ENCODE measurements at regions of chr2 and their contacts with region 1.

Region 1: DNA sequence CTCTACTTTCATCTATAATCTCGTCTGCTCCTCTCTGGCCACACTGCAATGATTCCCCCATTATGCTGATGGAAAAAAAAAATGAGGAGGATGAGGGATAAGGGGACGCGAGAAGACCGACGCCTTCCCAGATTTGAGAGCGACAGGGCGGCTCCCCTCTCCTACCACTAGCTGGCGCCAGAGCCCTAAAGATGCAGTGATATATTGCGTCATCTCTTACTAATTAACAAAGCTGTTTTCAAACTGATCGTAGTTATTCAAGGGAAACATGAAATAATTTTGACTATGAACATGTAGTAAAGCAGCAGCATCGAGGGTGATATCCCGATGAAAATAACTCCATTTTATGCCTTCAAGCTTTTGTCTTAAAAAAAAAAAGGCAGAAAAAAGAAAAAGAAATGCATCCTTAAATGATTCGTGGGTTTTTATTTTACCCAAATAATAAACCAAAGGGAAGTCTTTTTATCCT is 48.0 kb upstream of the HNRNPA3 start:
- DNase-seq: peak; percentile 75 to 87
- H3K4me3 ChIP-seq: peak overlapping the region; percentile 37; the same call in 1 of the 2 replicates
- H3K27ac ChIP-seq: peak overlapping the region; percentile 65
- H3K4me1 ChIP-seq: peaks cover 55% of the 10 kb centered on the region
- H3K27me3 ChIP-seq: no peaks in the 10 kb centered on the region
- CTCF ChIP-seq: peak; percentile 100

Region 2: GRCh38 chr2:177195194-177195593 is 30.6 kb after region 1 on chr2:
- CTCF ChIA-PET with region 1: interaction called, 16 read pairs
- POLR2A ChIA-PET with region 1: interaction called, 6 read pairs
- intact Hi-C with region 1: no loop called
- DNase-seq: no peak
- H3K4me3 ChIP-seq: no peak overlapping the region
- H3K27ac ChIP-seq: no peak overlapping the region
- H3K4me1 ChIP-seq: no peaks in the 10 kb centered on the region
- H3K27me3 ChIP-seq: no peaks in the 10 kb centered on the region
- CTCF ChIP-seq: no peak

Region 3: GRCh38 chr2:177239932-177240630 is 75.5 kb after region 1 on chr2:
- CTCF ChIA-PET with region 1: interaction called, 22 read pairs
- POLR2A ChIA-PET with region 1: interaction called, 5 read pairs
- intact Hi-C with region 1: no loop called
- DNase-seq: peak in 1 of 2 experiments; percentile 47
- H3K4me3 ChIP-seq: no peak overlapping the region
- H3K27ac ChIP-seq: peak overlapping the region; percentile 97
- H3K4me1 ChIP-seq: peaks cover 56% of the 10 kb centered on the region
- H3K27me3 ChIP-seq: no peaks in the 10 kb centered on the region
- CTCF ChIP-seq: no peak

Region 4: GRCh38 chr2:177332041-177332991 is 167.7 kb after region 1 on chr2:
- CTCF ChIA-PET with region 1: interaction called, 35 read pairs
- POLR2A ChIA-PET with region 1: interaction called, 6 read pairs
- intact Hi-C with region 1: loop called (anchors 1 kb)
- DNase-seq: peak; percentile 58
- H3K4me3 ChIP-seq: no peak overlapping the region
- H3K27ac ChIP-seq: no peak overlapping the region
- H3K4me1 ChIP-seq: peaks cover 10% of the 10 kb centered on the region
- H3K27me3 ChIP-seq: no peaks in the 10 kb centered on the region
- CTCF ChIP-seq: peak; percentile 87

Region 5: DNA sequence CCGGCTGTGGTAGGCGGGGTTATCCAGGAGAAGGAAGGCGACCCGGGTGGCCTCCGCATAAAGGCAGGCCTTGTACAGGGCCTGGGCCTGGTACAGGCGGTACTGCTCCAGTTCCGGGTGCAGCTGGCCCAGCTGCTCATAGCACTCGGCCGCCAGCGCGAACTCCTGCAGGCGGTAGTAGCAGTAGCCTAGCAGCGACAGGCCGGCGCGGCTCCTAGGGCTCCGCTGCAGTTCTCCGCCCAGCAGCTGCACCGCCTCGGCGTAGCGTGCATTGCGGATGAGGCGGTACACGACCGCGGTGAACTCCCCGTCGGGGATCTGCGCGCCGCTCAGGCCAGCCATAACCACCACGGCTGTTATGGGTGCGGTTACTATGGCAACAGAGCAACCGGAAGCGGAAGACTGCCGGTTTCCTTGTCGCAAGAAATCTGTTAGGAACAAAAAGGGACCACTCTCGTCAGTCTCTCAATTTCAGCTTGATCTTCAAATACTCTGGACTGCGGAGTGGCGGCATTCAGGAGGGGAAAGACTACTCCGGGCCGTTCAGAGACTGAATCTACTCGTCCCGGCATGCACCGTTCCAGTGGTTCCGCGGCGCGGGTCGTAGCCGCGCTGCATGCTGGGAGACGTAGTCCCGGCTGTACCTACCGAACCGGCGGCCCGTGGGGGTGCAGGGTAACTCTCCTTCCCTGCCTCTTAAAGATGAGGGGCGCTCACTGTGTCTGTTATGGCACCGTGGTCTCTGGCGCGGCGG is 388.0 kb after region 1 on chr2:
- CTCF ChIA-PET with region 1: no interaction called
- POLR2A ChIA-PET with region 1: no interaction called
- intact Hi-C with region 1: loop called (anchors 10 kb)
- DNase-seq: peak; percentile 85 to 93
- H3K4me3 ChIP-seq: peak overlapping the region; percentile 79
- H3K27ac ChIP-seq: peak overlapping the region; percentile 61
- H3K4me1 ChIP-seq: peaks cover 4% of the 10 kb centered on the region; the same call in 1 of the 2 replicates
- H3K27me3 ChIP-seq: no peaks in the 10 kb centered on the region
- CTCF ChIP-seq: no peak

Region 6: GRCh38 chr2:177758591-177759371 is 594.2 kb after region 1 on chr2:
- CTCF ChIA-PET with region 1: interaction called, 8 read pairs
- POLR2A ChIA-PET with region 1: no interaction called
- intact Hi-C with region 1: loop called (anchors 2 kb)
- DNase-seq: peak in 1 of 2 experiments; percentile 53
- H3K4me3 ChIP-seq: no peak overlapping the region
- H3K27ac ChIP-seq: no peak overlapping the region
- H3K4me1 ChIP-seq: no peaks in the 10 kb centered on the region
- H3K27me3 ChIP-seq: no peaks in the 10 kb centered on the region
- CTCF ChIP-seq: peak; percentile 76